ENCODE measurements at regions of chr9 and their contacts with region 1.

Region 1: GRCh38 chr9:107576962-107577776 is 87.6 kb upstream of the KLF4 start:
- DNase-seq: no peak
- ATAC-seq: no peak
- H3K4me3 ChIP-seq: no peak overlapping the region
- H3K27ac ChIP-seq: no peak overlapping the region
- H3K4me1 ChIP-seq: no peaks in the 10 kb centered on the region
- H3K27me3 ChIP-seq: no peaks in the 10 kb centered on the region
- CTCF ChIP-seq: no peak

Region 2: DNA sequence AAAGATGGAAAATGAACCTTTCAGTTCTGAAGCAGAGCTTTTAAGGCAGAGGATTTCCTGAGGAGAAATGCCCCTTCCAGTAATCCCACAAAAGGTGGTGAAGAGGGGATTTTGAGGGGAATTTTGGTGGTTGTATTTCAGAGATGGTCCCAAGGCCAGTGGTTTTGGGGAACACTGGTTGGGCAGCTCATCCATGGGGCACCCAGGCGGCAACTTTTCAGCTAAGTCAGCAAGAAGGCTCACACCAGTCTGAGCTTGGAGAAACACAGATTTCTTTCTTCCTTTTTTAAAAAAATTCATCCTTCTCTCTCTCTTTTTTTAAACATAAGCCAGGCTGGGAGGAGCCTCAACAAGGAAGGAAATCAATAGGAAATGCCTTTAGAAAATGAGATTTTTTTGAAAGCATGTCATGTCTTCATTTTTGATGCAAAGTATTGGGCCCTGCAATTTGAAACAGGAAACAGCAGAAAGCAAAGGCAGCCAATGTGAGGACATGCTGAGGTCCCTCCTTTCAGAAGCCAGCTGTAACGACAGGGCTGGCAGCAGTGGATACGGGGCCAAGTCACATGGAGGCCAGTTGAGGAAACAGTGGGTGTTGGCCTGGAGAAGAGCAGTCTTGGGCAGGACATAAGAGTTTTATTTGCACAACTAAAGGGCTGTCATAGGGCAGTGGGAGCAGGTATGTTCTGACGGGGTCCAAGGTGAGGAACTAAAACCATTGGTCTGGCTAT is 67.7 kb after region 1 on chr9:
- CTCF ChIA-PET with region 1: no interaction called
- POLR2A ChIA-PET with region 1: interaction called, 31 read pairs
- intact Hi-C with region 1: no loop called
- DNase-seq: no peak
- ATAC-seq: no peak
- H3K4me3 ChIP-seq: no peak overlapping the region
- H3K27ac ChIP-seq: no peak overlapping the region
- H3K4me1 ChIP-seq: no peaks in the 10 kb centered on the region
- H3K27me3 ChIP-seq: no peaks in the 10 kb centered on the region
- CTCF ChIP-seq: no peak